ENCODE measurements at regions of chr10 and their contacts with region 1.

Region 1: DNA sequence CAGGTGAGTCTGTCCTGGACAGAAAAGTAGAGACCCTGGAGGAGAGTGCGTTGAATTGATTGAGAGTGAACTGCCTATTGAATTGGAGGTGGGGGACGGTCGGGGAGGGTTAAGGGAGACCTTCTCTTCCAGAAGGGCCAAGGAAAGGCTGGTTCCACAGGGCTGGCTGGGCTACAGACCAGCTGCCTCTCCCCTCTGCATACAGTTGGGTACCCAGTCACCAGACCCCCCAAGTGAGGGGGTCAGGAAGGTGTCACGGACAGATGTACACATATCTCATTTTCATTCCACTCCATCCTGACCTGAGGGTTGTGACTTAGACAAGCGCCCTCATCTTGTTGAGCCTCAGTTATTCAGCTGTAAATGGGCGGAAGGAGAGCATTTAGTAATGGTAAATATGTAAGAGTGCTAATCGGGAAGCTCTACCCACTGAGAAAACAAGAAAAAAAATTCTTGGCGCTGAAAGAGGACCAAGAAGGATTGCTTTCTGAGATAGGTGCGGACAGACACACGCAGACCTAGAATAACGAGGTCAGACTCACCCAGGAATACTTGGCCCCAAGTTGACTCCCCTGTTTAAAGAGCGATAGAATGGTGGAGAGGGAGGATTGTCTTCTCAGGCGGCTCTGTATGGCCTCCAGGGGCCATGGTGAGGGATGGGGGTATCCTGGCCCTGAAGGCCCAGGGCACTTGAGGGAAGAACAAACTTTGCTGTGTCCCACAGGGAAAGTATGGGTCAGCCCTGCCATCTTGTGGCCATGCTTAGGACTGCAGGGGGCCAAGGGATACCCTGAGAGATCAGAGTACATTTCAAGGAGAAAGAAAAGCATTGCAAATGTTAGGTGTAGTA is 7.2 kb upstream of the MBL2 start:
- DNase-seq: peak; percentile 65
- ATAC-seq: peak; percentile 76
- H3K4me3 Mint-ChIP-seq: no peak overlapping the region
- H3K27ac Mint-ChIP-seq: no peak overlapping the region
- H3K4me1 Mint-ChIP-seq: no peaks in the 10 kb centered on the region
- H3K27me3 Mint-ChIP-seq: no peaks in the 10 kb centered on the region
- CTCF ChIP-seq: peak; percentile 65

Region 2: GRCh38 chr10:52703898-52704297 is 75.9 kb before region 1 on chr10:
- CTCF ChIA-PET with region 1: no interaction called
- POLR2A ChIA-PET with region 1: no interaction called
- intact Hi-C with region 1: no loop called
- DNase-seq: no peak
- ATAC-seq: no peak
- H3K4me3 Mint-ChIP-seq: no peak overlapping the region
- H3K27ac Mint-ChIP-seq: no peak overlapping the region
- H3K4me1 Mint-ChIP-seq: no peaks in the 10 kb centered on the region
- H3K27me3 Mint-ChIP-seq: no peaks in the 10 kb centered on the region
- CTCF ChIP-seq: no peak

Region 3: DNA sequence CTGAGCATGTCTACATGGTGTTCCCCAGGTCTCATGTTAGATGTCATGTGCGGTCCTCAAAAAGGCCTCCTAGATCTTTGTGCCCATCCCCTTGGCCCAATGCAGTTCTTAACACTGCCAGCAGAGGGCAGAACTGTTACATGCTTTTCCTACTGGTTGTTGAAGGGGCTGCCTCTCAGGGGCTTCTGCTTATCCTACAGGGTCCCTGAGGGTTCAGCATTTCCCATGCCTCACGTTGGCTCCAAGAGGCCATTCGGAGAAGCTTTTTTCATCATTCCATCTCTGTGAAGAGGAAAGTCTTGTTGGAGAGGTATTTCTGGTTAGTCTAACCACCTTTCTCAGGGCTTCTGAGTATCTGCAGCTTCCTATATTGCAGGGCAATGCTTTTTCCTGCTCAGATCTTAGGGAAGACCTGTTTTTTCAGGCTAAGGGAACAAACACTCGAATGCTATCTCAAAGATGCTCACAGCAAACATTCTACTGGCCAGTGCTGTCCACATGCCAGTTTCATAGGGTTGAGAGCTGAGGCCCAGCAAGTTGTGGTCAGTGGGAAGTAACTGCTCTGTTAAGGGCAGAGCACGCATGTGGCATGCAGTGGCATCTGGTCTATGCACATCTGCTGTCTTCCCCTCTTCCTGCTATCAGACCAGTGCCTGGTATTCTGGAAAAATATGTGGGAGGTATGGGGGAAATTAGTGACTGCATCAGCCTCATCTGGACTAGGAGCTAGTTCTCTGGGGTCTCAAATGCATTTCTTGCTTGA is 38.7 kb before region 1 on chr10:
- CTCF ChIA-PET with region 1: interaction called, 23 read pairs
- POLR2A ChIA-PET with region 1: no interaction called
- intact Hi-C with region 1: loop called (anchors 5 kb)
- DNase-seq: peak; percentile 61
- ATAC-seq: peak; percentile 53
- H3K4me3 Mint-ChIP-seq: no peak overlapping the region
- H3K27ac Mint-ChIP-seq: no peak overlapping the region
- H3K4me1 Mint-ChIP-seq: no peaks in the 10 kb centered on the region
- H3K27me3 Mint-ChIP-seq: no peaks in the 10 kb centered on the region
- CTCF ChIP-seq: peak; percentile 78